ENCODE measurements at regions of chrX and their contacts with region 1.

Region 1: GRCh38 chrX:106467422-106467821 is 144.4 kb upstream of the RADX start:
- DNase-seq: peak; percentile 68
- ATAC-seq: peak; percentile 98
- H3K4me3 Mint-ChIP-seq: no peak overlapping the region
- H3K27ac Mint-ChIP-seq: no peak overlapping the region
- H3K4me1 Mint-ChIP-seq: no peaks in the 10 kb centered on the region; the same call in none of the 2 replicates
- H3K27me3 Mint-ChIP-seq: no peaks in the 10 kb centered on the region
- CTCF ChIP-seq: no peak

Region 2: GRCh38 chrX:106415276-106415895 is 52.0 kb before region 1 on chrX:
- CTCF ChIA-PET with region 1: interaction called, 12 read pairs
- POLR2A ChIA-PET with region 1: no interaction called
- DNase-seq: peak; percentile 10
- ATAC-seq: peak; percentile 64
- H3K4me3 Mint-ChIP-seq: no peak overlapping the region
- H3K27ac Mint-ChIP-seq: no peak overlapping the region
- H3K4me1 Mint-ChIP-seq: no peaks in the 10 kb centered on the region
- H3K27me3 Mint-ChIP-seq: no peaks in the 10 kb centered on the region
- CTCF ChIP-seq: peak; percentile 33; the same call in 1 of the 2 replicates

Measured in WTC11 (cell line).